A673 (cell line): ENCODE measurements at regions of chrX and their contacts with region 1.

Region 1: DNA sequence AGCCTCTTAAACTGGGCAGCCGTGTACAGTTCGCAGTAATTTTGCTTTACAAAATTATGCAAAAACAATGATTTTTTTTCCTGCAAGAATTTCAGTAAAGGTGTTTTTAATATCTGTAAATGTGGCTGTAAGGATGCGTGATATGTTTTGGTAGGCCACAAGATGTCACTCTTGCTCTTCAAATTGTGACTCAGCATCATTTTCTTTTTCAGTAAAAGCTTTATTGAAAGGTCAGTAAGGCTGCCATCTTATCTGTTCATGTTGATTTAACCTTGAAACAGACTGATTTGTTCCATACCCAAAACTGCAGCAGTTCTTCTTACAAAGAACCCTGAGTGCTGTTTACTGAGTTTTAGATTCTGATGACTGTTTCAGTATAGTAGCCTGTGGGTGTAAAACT is 39.9 kb downstream of the TXLNG start:
- DNase-seq: peak; percentile 71
- H3K4me3 ChIP-seq: no peak overlapping the region
- H3K27ac ChIP-seq: no peak overlapping the region
- H3K4me1 ChIP-seq: no peaks in the 10 kb centered on the region
- H3K27me3 ChIP-seq: no peaks in the 10 kb centered on the region
- CTCF ChIP-seq: peak; percentile 76

Region 2: DNA sequence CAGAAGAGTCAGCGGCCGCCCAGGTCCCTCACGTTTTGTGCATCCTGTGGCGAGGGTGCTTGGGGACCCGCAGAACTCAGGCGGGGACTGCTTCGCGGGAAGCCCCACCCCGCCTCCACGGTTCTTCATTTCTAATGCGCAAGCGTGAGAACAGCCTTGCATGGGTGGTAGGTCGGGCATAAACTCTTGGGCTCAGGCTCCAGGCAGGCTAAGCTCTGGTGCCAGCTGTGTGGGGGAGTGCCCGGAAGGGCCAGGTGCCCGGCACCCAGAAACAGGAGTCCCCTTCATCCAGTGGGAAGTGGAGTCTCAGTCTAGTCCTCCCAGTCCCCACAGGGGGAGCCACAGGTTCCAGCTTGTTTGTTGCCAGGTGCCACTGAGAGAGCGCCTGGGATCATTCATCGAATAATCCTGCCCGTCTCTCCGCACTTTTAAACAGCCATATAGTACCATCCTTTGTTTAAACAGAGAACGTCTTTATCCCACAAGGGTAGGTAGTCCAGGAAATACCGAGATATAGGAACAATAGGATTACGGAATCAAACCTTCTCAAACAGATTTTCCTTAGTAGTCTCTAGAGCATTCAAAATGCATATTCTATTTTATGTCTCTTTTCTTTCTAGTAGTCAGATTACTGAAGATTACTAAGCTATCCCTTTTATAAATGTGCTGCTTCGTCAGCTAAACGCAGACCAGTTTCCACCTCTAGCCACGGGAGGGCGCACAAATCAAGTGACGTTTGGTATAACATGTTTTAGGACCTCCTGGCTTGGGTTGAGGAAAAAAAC is 56.7 kb after region 1 on chrX:
- CTCF ChIA-PET with region 1: interaction called, 3 read pairs
- POLR2A ChIA-PET with region 1: no interaction called
- intact Hi-C with region 1: loop called (anchors 5 kb)
- DNase-seq: peak; percentile 83
- H3K4me3 ChIP-seq: peak overlapping the region; percentile 41
- H3K27ac ChIP-seq: peak overlapping the region; percentile 30
- H3K4me1 ChIP-seq: no peaks in the 10 kb centered on the region
- H3K27me3 ChIP-seq: peaks cover 8% of the 10 kb centered on the region
- CTCF ChIP-seq: peak; percentile 87

Region 3: GRCh38 chrX:16892504-16893362 is 66.5 kb after region 1 on chrX:
- CTCF ChIA-PET with region 1: interaction called, 4 read pairs
- POLR2A ChIA-PET with region 1: no interaction called
- intact Hi-C with region 1: loop called (anchors 2 kb)
- DNase-seq: peak; percentile 91
- H3K4me3 ChIP-seq: no peak overlapping the region
- H3K27ac ChIP-seq: no peak overlapping the region
- H3K4me1 ChIP-seq: no peaks in the 10 kb centered on the region
- H3K27me3 ChIP-seq: peaks cover 18% of the 10 kb centered on the region
- CTCF ChIP-seq: peak; percentile 97

Region 4: DNA sequence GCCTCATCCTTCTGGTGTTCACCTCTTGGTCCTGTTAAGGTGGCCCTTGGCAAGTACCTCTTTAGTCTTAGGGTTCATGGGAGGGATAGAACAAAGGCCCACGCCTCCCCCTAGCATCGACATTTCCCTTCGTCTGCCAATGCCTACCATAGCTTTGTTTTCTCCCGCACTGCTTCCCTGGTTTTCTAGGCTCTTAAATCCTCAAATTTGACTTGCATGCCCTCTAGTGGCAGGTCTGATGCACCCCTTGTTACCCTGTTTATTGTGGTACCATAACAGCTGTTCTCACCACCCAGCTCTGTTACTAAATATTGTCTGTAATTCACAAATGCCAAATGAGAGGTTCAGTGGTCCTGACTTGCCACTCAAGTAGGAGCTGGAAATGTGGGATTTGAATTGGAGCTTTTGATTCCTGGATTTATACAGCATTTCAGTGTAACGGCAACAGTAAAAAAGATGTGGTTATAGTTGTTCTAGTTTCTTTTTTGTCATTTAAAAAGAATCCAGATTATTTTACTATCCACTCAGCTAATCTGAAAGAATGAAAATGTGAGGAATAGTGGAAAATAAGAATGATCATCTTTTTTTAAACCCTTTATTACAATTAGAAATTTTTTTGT is 220.4 kb after region 1 on chrX:
- CTCF ChIA-PET with region 1: interaction called, 14 read pairs
- POLR2A ChIA-PET with region 1: no interaction called
- intact Hi-C with region 1: loop called (anchors 5 kb)
- DNase-seq: peak; percentile 77
- H3K4me3 ChIP-seq: no peak overlapping the region
- H3K27ac ChIP-seq: no peak overlapping the region
- H3K4me1 ChIP-seq: no peaks in the 10 kb centered on the region
- H3K27me3 ChIP-seq: no peaks in the 10 kb centered on the region
- CTCF ChIP-seq: peak; percentile 83

Region 5: DNA sequence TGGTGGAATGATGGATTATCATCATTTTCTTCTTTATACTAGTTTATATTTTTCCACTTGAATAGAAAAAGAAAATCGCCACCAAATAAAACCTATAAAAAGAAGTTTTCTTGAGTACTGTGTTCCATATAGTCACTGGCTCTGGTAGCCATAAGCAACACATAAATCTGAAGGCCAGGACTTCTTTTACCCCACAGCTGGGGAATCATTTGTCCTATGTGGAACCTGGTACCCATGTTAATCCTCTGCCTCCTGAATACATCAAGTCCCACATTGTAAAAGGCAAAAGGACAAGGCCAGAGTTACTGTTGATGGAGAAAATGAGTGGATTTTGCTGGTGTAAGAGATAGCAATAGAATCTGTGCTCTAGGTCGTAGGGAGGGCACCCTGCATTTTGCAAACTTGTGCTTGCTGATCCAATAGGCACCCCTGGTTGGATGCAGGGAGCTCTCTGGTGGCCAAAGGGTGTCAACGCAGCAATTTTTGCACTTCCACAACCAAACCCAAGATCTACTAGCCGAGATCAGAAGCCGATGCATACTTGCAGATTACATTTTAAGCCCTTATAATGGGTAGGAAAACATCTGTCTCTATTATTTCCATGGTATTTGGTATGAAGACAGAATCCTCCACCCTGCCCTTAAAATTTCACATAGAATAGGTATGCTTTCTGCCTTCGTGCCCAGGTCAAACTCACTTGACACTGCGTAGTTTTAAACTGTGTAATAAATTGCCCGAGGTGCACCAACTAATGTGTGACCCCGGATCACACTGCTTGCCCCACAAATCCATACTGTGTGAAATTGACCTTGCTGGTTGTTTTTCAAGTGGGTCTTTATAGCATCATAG is 764.9 kb after region 1 on chrX:
- CTCF ChIA-PET with region 1: no interaction called
- POLR2A ChIA-PET with region 1: no interaction called
- intact Hi-C with region 1: loop called (anchors 10 kb)
- DNase-seq: peak; percentile 65
- H3K4me3 ChIP-seq: no peak overlapping the region
- H3K27ac ChIP-seq: no peak overlapping the region
- H3K4me1 ChIP-seq: no peaks in the 10 kb centered on the region
- H3K27me3 ChIP-seq: no peaks in the 10 kb centered on the region
- CTCF ChIP-seq: peak; percentile 76